ENCODE measurements at regions of chr16 and their contacts with region 1.

Region 1: GRCh38 chr16:13957197-13958078 is 37.5 kb downstream of the ERCC4 start:
- DNase-seq: peak; percentile 51 to 54
- ATAC-seq: peak; percentile 88 to 98 (median 92)
- H3K4me3 ChIP-seq: peak overlapping the region in 7 of 10 donors; percentile 4 to 37 (median 32)
- H3K27ac ChIP-seq: peak overlapping the region; percentile 44 to 89 (median 69)
- H3K4me1 ChIP-seq: peaks cover 0 to 42% (median 15%) of the 10 kb centered on the region in 9 donors
- H3K27me3 ChIP-seq: no peaks in the 10 kb centered on the region
- CTCF ChIP-seq: no peak

Region 2: DNA sequence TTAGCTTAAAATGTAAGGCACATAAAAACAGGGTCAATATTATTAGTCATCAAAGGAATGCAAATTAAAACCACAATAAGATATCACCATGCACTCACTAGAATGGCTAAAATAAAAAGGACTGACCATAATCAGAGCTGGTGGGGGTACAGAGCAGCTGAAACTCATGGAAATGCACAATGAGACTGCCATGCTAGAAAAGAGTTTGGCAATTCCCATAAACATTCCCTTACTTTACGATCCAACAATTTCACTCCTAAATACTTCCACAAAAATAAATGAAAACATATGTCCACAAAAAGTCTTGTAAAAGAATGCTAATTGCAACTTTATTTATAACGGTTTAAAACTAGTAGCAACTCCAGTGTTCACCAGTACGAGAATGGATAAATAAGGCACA is 73.6 kb before region 1 on chr16:
- intact Hi-C with region 1: no loop called
- DNase-seq: no peak
- ATAC-seq: no peak
- H3K4me3 ChIP-seq: no peak overlapping the region
- H3K27ac ChIP-seq: no peak overlapping the region
- H3K4me1 ChIP-seq: no peaks in the 10 kb centered on the region
- H3K27me3 ChIP-seq: peaks cover 0 to 6% (median 0%) of the 10 kb centered on the region in 7 donors
- CTCF ChIP-seq: no peak

Region 3: GRCh38 chr16:13997933-13998332 is 40.5 kb after region 1 on chr16:
- intact Hi-C with region 1: loop called in 2 of 10 experiments (anchors 5 kb)
- DNase-seq: no peak
- ATAC-seq: no peak
- H3K4me3 ChIP-seq: no peak overlapping the region
- H3K27ac ChIP-seq: peak overlapping the region in 6 of 10 donors; percentile 38 to 95 (median 74)
- H3K4me1 ChIP-seq: peaks cover 5 to 79% (median 49%) of the 10 kb centered on the region in 9 donors
- H3K27me3 ChIP-seq: no peaks in the 10 kb centered on the region
- CTCF ChIP-seq: no peak

Region 4: GRCh38 chr16:14003074-14003570 is 45.7 kb after region 1 on chr16:
- intact Hi-C with region 1: loop called in 2 of 10 experiments (anchors 5 kb)
- DNase-seq: peak; percentile 55 to 80
- ATAC-seq: peak; percentile 57 to 86 (median 72)
- H3K4me3 ChIP-seq: peak overlapping the region in 8 of 10 donors; percentile 17 to 48 (median 42)
- H3K27ac ChIP-seq: peak overlapping the region in 9 of 10 donors; percentile 62 to 84 (median 75)
- H3K4me1 ChIP-seq: peaks cover 8 to 73% (median 61%) of the 10 kb centered on the region in 9 donors
- H3K27me3 ChIP-seq: no peaks in the 10 kb centered on the region
- CTCF ChIP-seq: peak in 4 of 9 donors; percentile 21 to 39 (median 31)

Measured in heart right ventricle (tissue), 16 donors.